H1 (cell line): ENCODE measurements at regions of chr16 and their contacts with region 1.

Region 1: GRCh38 chr16:3023669-3024478 is at the starts of genes HCFC1R1 and THOC6:
- DNase-seq: peak; percentile 97 to 98
- H3K4me3 ChIP-seq: peak within 1 kb of the TSS; percentile 39 to 97 (median 94)
- H3K27ac ChIP-seq: peak within 1 kb of the TSS; percentile 94
- H3K4me1 ChIP-seq: peaks cover 0 to 23% (median 20%) of the 10 kb centered on the region in 4 experiments; a peak in 6 of 7 replicates
- H3K27me3 ChIP-seq: no peaks in the 10 kb centered on the region
- CTCF ChIP-seq: no peak
- EP300 ChIP-seq: no peak
- POLR2A ChIP-seq: peak; percentile 86 to 89
- RAD21 ChIP-seq: peak in 1 of 2 experiments; percentile 2; a peak in 2 of 4 replicates
- total RNA-seq, gene HCFC1R1: 66.2 and 72.7 TPM in 2 replicates
- total RNA-seq, gene THOC6: 78.5 and 82.9 TPM in 2 replicates

Region 2: GRCh38 chr16:2968738-2969544 is 54.9 kb before region 1 on chr16 and contains the start of gene PAQR4:
- CTCF ChIA-PET with region 1: interaction called, 10 read pairs
- POLR2A ChIA-PET with region 1: interaction called, 455 read pairs
- DNase-seq: peak in 1 of 2 experiments; percentile 95
- H3K4me3 ChIP-seq: peak within 1 kb of the TSS; percentile 74 to 94 (median 80)
- H3K27ac ChIP-seq: peak within 1 kb of the TSS; percentile 48; the same call in 1 of the 2 replicates
- H3K4me1 ChIP-seq: peaks cover 0 to 31% (median 15%) of the 10 kb centered on the region in 4 experiments; a peak in 6 of 7 replicates
- H3K27me3 ChIP-seq: peaks cover 15 to 32% (median 23%) of the 10 kb centered on the region in 4 experiments; a peak in 6 of 7 replicates
- CTCF ChIP-seq: no peak
- EP300 ChIP-seq: peak in 1 of 2 experiments; percentile 16; a peak in 1 of 3 replicates
- POLR2A ChIP-seq: peak in 1 of 2 experiments; percentile 59; a peak in 2 of 3 replicates
- RAD21 ChIP-seq: no peak
- total RNA-seq, gene PAQR4: 28.2 and 28.8 TPM in 2 replicates

Region 3: GRCh38 chr16:2980227-2981086 is 43.4 kb before region 1 on chr16 and contains the start of gene PKMYT1:
- CTCF ChIA-PET with region 1: interaction called, 12 read pairs
- POLR2A ChIA-PET with region 1: interaction called, 455 read pairs
- DNase-seq: peak in 1 of 2 experiments; percentile 95
- H3K4me3 ChIP-seq: peak within 1 kb of the TSS; percentile 68 to 79 (median 73)
- H3K27ac ChIP-seq: peak within 1 kb of the TSS; percentile 91
- H3K4me1 ChIP-seq: peaks cover 3 to 23% (median 14%) of the 10 kb centered on the region in 4 experiments
- H3K27me3 ChIP-seq: no peaks in the 10 kb centered on the region; a peak in 1 of 7 replicates
- CTCF ChIP-seq: no peak
- EP300 ChIP-seq: no peak
- POLR2A ChIP-seq: peak in 1 of 2 experiments; percentile 79; a peak in 2 of 3 replicates
- RAD21 ChIP-seq: no peak
- total RNA-seq, gene PKMYT1: 74.7 and 83.6 TPM in 2 replicates

Region 4: GRCh38 chr16:3003582-3004302 is 20.1 kb before region 1 on chr16:
- CTCF ChIA-PET with region 1: interaction called, 639 read pairs
- POLR2A ChIA-PET with region 1: interaction called, 1,808 read pairs
- DNase-seq: peak; percentile 95 to 98
- H3K4me3 ChIP-seq: peak overlapping the region in 1 of 4 experiments; percentile 58; a peak in 1 of 8 replicates
- H3K27ac ChIP-seq: no peak overlapping the region
- H3K4me1 ChIP-seq: peaks cover 11 to 33% (median 27%) of the 10 kb centered on the region in 4 experiments
- H3K27me3 ChIP-seq: no peaks in the 10 kb centered on the region
- CTCF ChIP-seq: peak; percentile 63 to 93 (median 71)
- EP300 ChIP-seq: peak in 1 of 2 experiments; percentile 36; a peak in 1 of 3 replicates
- POLR2A ChIP-seq: 0 out of 3 replicates have a peak, but pooled peaks of 1 of the 2 experiments have one; percentile 32
- RAD21 ChIP-seq: peak; percentile 85 to 92

Region 5: GRCh38 chr16:3045357-3045728 is 21.5 kb after region 1 on chr16:
- CTCF ChIA-PET with region 1: interaction called, 117 read pairs
- POLR2A ChIA-PET with region 1: interaction called, 1,808 read pairs
- DNase-seq: peak in 1 of 2 experiments; percentile 73
- H3K4me3 ChIP-seq: peak overlapping the region; percentile 66 to 89 (median 80)
- H3K27ac ChIP-seq: no peak overlapping the region; the same call in 1 of the 2 replicates
- H3K4me1 ChIP-seq: peaks cover 0 to 3% (median 0%) of the 10 kb centered on the region in 4 experiments; a peak in 3 of 7 replicates
- H3K27me3 ChIP-seq: peaks cover 0 to 8% (median 3%) of the 10 kb centered on the region in 4 experiments; a peak in 6 of 7 replicates
- CTCF ChIP-seq: no peak
- EP300 ChIP-seq: no peak
- POLR2A ChIP-seq: no peak
- RAD21 ChIP-seq: no peak

Region 6: DNA sequence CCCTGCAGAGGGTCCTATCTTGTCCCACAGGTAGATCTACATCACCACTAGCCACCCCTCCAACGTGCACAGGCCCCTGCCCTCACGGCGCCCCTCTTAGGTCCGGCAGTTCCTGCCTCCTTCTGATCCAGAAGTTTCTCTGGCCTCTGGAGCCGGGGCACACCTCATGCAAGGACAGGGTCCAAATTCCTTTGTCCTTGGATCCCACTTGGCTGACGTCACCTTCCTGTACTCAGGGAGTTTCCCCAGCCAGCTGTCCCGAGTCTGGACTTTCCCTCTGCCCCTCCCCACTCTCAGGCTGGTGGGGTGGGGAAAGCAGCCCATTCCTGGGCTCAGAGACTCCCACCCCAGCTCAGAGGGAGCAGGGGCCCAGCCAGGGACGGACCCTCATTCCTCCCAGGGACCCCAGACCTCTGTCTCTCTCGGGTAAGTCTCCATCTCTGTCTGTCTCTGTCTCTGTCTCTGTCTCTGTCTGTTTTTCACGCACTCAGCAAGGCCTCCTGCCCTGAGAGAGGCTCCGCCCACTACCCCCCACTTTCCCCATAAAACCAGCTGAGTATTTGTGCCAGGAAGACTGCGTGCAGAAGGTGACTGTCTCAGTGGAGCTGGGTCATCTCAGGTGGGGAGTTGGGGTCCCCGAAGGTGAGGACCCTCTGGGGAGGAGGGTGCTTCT is 41.3 kb after region 1 on chr16 and contains the start of gene IL32:
- CTCF ChIA-PET with region 1: interaction called, 4 read pairs
- POLR2A ChIA-PET with region 1: interaction called, 43 read pairs
- DNase-seq: no peak
- H3K4me3 ChIP-seq: no peak within 1 kb of the TSS
- H3K27ac ChIP-seq: peak within 1 kb of the TSS; percentile 23; the same call in 1 of the 2 replicates
- H3K4me1 ChIP-seq: peaks cover 0 to 3% (median 1%) of the 10 kb centered on the region in 4 experiments; a peak in 2 of 7 replicates
- H3K27me3 ChIP-seq: no peaks in the 10 kb centered on the region
- CTCF ChIP-seq: no peak
- EP300 ChIP-seq: no peak
- POLR2A ChIP-seq: no peak
- RAD21 ChIP-seq: no peak
- total RNA-seq, gene IL32: 2.0 and 2.7 TPM in 2 replicates

Region 7: DNA sequence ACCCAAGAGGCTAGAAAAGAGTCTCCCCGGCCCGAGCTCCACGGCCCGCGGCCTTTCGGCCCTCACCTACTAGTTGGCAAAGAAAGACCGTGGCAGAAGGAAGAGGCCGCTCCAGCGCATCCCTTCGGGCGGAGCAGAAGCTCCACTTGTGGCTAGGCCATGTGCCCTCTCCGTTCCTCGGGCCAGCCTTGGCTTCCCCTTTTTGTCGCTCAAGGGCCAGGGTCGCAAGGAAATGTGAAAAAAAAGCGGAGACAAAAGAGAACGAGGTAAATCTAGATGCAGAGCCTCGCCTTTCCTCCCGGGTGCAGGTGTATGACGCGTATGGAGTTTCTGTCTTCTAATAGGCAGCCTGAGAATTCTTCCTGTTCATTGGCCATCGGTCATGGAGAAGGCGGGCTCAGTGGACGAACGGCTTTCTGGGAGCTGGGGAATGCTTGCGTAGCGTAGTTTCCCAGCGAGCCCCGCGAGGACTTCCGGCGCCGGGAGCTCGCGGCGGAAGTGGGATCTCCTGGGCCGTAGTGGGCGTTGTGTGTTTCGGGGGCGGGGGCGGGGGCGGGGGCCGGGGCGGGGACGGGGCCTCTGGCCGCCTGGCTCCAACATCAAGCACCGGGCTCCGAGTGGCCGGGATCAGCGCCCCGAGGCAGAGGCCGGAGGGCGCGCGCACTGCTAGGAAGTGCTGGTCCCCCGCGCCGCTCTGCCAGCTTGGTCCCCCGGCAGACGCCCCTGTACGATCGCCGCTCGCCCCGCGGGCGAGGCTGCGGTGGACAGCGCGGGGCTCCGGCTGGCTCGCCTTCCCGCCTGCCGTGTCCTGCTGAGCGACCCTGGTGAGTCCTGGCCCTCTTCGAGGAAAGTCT is 110.9 kb after region 1 on chr16 and contains the start of gene ZNF213:
- CTCF ChIA-PET with region 1: interaction called, 3 read pairs
- POLR2A ChIA-PET with region 1: interaction called, 11 read pairs
- DNase-seq: peak; percentile 88 to 93
- H3K4me3 ChIP-seq: peak within 1 kb of the TSS; percentile 86 to 96 (median 90)
- H3K27ac ChIP-seq: peak within 1 kb of the TSS; percentile 97
- H3K4me1 ChIP-seq: peaks cover 0 to 2% (median 0%) of the 10 kb centered on the region in 4 experiments; a peak in 1 of 7 replicates
- H3K27me3 ChIP-seq: no peaks in the 10 kb centered on the region
- CTCF ChIP-seq: no peak
- EP300 ChIP-seq: no peak
- POLR2A ChIP-seq: peak in 1 of 2 experiments; percentile 92; a peak in 2 of 3 replicates
- RAD21 ChIP-seq: no peak
- total RNA-seq, gene ZNF213: 6.9 and 7.3 TPM in 2 replicates